GM18951 (cell line): ENCODE measurements at regions of chr20 and their contacts with region 1.

Region 1: DNA sequence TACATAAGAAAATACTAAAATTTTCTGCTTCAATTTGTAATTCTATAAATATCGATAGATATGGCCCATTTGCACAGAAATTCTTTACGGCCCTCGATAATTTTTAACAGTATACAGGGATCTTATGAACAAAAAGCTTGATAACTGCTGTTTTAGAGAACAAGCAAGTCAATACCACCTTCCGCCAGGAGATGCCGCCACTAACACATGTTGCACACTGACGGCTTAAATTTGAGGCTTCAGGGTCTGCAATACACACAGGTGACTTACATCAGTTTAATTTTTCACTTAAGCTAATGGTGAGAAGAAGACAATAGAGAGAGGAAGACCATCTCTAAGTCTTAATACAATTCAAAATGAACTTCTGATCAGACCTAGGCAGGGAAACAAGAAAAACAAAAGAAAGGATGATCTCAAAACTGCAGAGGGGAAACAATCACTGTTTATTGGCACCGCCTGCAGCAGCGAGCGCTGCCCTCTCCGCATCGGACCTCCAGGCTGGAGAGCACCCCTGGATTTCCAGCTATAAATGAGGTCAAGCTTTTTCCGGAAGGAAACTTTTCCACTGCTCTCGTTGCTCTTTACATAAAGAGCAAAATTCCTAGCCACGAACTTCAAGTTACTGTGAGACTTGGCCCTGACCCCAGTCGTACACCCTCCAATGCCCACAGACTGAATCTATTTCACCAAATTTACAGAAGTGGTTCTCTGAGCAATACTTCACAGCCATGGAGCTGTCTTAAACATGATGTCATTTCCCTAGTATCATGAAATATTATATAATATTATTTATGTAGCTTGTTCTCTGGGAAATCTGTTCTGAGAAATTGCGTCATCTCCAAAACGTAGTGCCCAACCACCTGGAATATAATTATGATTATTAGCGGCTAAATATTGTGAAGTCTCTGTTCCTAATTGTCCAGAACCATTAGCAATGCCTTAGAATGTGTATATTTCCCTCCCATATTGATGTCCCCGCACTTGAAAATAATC is 54.1 kb downstream of the OTOR start:
- POLR2A ChIP-seq: no peak

Region 2: DNA sequence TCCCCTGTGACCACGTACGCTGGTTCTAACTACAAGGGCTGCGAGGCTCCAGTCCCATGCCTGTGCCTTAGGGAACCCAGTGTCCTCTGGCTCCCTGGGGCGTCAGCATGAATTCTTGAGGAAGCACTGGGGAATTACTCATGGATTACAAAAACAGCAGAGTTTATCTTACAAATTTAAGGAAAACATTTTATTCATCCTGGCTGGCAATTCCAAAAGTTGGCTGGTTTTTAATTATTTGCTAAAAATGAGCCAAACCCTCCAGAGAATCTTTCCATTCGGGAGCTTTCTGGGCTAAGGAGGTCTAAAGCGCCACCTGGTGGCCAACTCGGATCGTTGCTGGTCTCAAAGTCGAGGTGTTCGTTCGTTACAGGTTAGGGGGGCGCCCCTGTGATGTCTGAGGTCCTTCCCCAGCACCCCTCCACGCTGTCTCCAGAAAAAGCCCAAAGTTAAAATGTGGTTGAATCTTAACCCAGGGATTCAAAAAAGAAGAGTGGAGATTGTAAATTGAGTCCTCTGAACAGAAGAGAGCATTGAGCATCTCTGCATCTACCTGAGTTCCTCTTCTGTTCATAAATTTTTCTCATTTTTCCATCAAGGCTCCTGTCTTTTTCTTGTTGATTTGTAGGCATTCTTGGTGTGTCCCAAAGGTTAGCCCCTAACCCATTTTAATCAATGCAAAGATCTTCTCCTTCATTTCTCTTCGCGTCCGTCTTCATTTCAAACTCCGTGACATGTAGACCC is 629.6 kb after region 1 on chr20:
- in situ Hi-C with region 1: loop called (anchors 25 kb)
- POLR2A ChIP-seq: no peak